Breast epithelium (tissue), 4 donors: ENCODE measurements at regions of chr12 and their contacts with region 1.

Region 1: DNA sequence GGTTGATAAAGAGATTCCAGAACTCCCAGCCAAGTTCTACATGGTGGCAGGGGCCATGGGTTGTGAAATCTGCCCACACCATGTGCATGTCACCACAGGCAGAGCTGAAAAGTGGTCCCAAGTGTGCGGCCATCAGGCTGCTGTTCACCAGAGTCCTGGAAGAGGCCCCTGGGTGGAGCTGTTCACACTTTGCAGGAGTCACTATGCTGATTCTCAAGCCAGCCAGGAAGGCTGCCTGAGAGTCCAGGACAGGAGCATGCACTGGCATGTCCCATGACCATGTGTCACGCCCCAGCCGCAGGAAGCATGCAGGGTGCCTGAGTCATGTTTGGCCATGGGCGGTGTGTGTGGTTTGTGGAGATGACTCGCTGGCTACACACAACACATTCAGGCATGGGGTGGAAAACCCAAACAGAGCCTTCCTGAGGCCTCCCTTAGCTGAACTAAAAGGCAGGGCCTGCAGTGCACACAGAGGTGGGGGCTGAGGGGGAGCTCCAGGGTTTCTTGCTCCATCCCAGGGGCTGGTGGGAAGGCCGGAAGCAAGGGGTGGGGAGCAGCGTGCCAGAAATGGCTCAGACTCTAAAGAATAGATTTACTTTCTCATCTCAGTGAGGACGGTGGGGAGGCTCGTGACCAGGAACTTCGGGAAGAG is 19.4 kb downstream of the ABCB9 start:
- DNase-seq: peak; percentile 94 to 99
- H3K4me3 ChIP-seq: peak overlapping the region in 1 of 3 donors; percentile 49
- H3K27ac ChIP-seq: peak overlapping the region; percentile 96 to 99
- H3K4me1 ChIP-seq: peaks cover 30 to 31% of the 10 kb centered on the region in 2 donors
- H3K27me3 ChIP-seq: no peaks in the 10 kb centered on the region
- CTCF ChIP-seq: peak in 1 of 3 donors; percentile 59
- POLR2A ChIP-seq: no peak

Region 2: GRCh38 chr12:122860346-122861090 is 86.3 kb before region 1 on chr12:
- intact Hi-C with region 1: loop called (anchors 5 kb)
- DNase-seq: peak; percentile 80 to 92
- H3K4me3 ChIP-seq: no peak overlapping the region
- H3K27ac ChIP-seq: peak overlapping the region; percentile 84 to 92
- H3K4me1 ChIP-seq: peaks cover 4 to 29% of the 10 kb centered on the region in 2 donors
- H3K27me3 ChIP-seq: no peaks in the 10 kb centered on the region
- CTCF ChIP-seq: peak; percentile 96 to 99 (median 98)
- POLR2A ChIP-seq: no peak

Region 3: GRCh38 chr12:122895705-122896636 is 50.8 kb before region 1 on chr12 and contains the start of gene VPS37B:
- intact Hi-C with region 1: loop called (anchors 2 kb)
- DNase-seq: peak; percentile 77 to 82
- H3K4me3 ChIP-seq: peak within 1 kb of the TSS; percentile 92 to 98 (median 93)
- H3K27ac ChIP-seq: peak within 1 kb of the TSS; percentile 92 to 98
- H3K4me1 ChIP-seq: peaks cover 0 to 32% of the 10 kb centered on the region in 2 donors
- H3K27me3 ChIP-seq: no peaks in the 10 kb centered on the region
- CTCF ChIP-seq: peak in 1 of 3 donors; percentile 30
- POLR2A ChIP-seq: peak; percentile 65
- total RNA-seq, gene VPS37B: 15.4 to 37.8 (median 34.4) TPM

Region 4: DNA sequence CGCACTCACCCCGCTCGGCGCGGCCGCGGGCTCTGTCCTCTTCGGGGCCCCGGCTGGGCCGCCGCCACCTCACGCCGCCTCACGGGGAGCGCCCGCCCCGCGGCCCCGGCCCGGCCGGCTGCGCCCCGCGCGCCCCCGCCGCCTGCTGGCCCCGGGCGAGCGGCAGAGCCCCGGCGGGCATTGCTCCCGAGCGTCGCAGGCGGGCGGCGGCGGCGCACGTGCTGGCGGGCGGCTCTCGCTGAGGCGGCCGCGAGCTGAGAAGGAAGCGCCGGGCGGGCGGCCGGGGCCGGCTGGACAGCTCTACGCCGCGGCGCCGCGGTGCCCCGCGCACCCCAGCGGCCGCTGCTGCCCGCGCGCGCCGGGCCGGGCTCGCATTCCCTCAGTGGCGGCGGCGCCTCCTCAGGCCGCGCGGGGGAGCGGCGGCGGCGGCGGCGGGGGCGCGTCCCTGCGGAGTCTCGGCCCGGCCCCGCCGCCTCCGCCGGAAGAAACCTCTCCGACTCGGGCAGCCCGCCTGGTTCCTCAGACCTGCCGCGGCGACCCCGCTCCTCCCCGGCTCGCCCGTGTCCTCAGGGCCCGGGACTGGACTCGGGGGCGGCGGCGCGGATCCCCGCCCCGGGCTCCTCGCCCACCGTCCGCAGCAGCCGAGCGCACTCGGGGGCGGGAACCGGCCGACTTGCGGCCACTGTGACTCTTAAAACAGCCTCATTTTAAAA is 204.1 kb after region 1 on chr12 and contains the start of gene PITPNM2:
- intact Hi-C with region 1: no loop called
- DNase-seq: peak in 1 of 2 donors; percentile 58
- H3K4me3 ChIP-seq: peak within 1 kb of the TSS; percentile 73 to 75 (median 74)
- H3K27ac ChIP-seq: peak within 1 kb of the TSS; percentile 66 to 73
- H3K4me1 ChIP-seq: no peaks in the 10 kb centered on the region
- H3K27me3 ChIP-seq: no peaks in the 10 kb centered on the region
- CTCF ChIP-seq: peak in 1 of 3 donors; percentile 64
- POLR2A ChIP-seq: no peak
- total RNA-seq, gene PITPNM2: 2.3 to 7.5 (median 2.4) TPM